ENCODE measurements at regions of chr20 and their contacts with region 1.

Region 1: GRCh38 chr20:9103955-9104354 is 35.1 kb downstream of the PLCB4 start:
- DNase-seq: peak; percentile 84
- ATAC-seq: peak; percentile 59
- H3K4me3 ChIP-seq: no peak overlapping the region
- H3K27ac ChIP-seq: no peak overlapping the region
- H3K4me1 ChIP-seq: no peaks in the 10 kb centered on the region
- H3K27me3 ChIP-seq: no peaks in the 10 kb centered on the region
- CTCF ChIP-seq: no peak

Region 2: DNA sequence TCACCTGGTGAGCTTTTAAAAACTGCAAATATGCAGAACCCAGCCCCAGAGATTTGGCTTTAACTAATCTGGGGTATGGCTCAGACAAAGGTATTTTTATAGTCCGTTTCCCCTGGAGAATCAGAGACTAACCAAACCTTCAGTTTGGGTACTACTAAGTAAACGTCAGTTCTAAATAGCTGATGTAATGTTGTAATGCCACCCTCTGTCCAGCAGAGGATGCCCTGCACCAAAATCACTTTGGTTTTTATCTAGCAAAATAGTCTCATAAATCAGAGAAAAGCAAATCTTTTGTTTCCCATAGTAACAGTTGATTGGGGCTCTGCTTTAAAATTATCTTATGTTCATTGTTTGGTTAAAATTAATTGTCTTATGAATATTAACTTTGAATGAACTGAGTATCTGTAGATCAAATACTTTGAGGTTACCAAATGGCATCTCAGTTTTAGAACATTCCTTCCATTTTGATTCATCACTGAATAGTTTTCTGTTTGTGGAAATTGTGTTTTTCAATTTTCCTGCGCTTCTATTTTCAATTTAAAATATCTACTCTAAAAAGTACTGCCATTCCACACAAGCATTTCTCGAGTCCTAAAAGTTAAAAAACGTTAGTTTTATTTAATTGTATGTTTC is 313.4 kb before region 1 on chr20:
- CTCF ChIA-PET with region 1: no interaction called
- POLR2A ChIA-PET with region 1: no interaction called
- intact Hi-C with region 1: no loop called
- DNase-seq: peak; percentile 81
- ATAC-seq: peak; percentile 70
- H3K4me3 ChIP-seq: no peak overlapping the region
- H3K27ac ChIP-seq: no peak overlapping the region
- H3K4me1 ChIP-seq: no peaks in the 10 kb centered on the region
- H3K27me3 ChIP-seq: no peaks in the 10 kb centered on the region
- CTCF ChIP-seq: peak; percentile 98

Region 3: DNA sequence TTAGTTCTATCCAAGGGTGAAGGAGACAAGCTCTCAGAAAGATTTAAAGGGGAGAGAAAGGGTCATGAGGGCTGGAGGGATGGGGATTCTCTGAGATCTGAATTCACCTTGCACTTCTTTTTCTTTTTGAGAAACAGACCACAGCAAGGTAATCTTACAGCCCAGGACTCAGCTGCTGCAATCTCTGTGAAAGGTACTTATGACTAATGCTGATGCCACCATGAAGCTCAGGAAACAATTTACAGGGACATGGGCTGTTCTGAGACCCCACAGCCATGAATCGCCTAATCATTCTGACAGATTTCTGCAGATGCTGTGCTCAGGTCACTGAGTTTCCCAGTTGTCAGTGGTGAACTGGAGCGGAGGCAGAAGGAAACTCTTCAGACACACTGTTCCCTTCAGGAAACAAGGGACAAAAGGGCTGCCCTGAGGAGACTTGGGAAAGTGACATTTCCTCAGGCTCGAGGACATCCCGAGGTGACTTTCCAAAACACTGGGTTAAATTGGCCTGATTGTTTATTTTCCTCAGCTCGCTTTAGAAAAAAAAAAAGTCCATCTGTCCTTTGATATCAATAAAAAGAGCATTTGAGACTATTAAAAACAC is 138.9 kb before region 1 on chr20:
- CTCF ChIA-PET with region 1: no interaction called
- POLR2A ChIA-PET with region 1: interaction called, 15 read pairs
- intact Hi-C with region 1: no loop called
- DNase-seq: peak; percentile 51
- ATAC-seq: peak; percentile 74
- H3K4me3 ChIP-seq: no peak overlapping the region
- H3K27ac ChIP-seq: no peak overlapping the region
- H3K4me1 ChIP-seq: peaks cover 12% of the 10 kb centered on the region
- H3K27me3 ChIP-seq: no peaks in the 10 kb centered on the region
- CTCF ChIP-seq: no peak

Region 4: DNA sequence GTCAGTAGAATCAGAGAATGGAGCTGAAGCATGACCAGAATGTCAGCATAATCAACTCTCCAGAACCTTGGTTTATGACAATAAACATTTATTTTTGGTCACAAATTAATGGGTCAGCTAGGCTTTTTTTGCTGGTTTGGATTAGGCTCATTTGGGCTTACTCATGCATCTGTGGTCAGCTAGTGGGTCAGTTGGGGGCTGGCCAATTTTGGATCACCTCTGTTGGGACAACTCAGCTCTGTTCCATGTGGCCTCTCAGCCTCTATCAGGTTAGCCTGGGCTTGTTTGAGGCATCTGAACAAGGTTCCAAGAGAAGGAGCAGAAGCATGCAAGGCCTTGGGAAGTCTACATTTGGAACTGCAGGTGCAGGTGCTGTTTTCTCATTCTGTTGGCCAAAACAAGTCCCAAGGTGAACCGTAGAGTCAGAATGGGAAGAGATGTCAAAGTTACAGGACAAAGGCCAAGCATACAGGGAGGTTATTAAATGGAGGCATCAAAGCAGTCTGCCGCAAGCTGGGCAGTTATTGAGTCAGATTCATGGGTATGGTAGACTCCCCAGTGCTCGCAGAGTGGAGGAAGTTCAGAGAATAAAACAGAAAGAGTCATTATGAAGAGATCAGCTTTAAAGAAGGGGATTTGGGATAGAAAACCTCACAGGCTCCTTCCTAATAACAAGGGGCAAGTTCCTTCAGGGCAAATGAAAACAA is 137.9 kb after region 1 on chr20:
- CTCF ChIA-PET with region 1: no interaction called
- POLR2A ChIA-PET with region 1: no interaction called
- intact Hi-C with region 1: no loop called
- DNase-seq: peak; percentile 74
- ATAC-seq: peak; percentile 61
- H3K4me3 ChIP-seq: no peak overlapping the region
- H3K27ac ChIP-seq: peak overlapping the region; percentile 2; the same call in 1 of the 2 replicates
- H3K4me1 ChIP-seq: peaks cover 24% of the 10 kb centered on the region
- H3K27me3 ChIP-seq: no peaks in the 10 kb centered on the region
- CTCF ChIP-seq: no peak